ENCODE measurements at regions of chr12 and their contacts with region 1.

Region 1: DNA sequence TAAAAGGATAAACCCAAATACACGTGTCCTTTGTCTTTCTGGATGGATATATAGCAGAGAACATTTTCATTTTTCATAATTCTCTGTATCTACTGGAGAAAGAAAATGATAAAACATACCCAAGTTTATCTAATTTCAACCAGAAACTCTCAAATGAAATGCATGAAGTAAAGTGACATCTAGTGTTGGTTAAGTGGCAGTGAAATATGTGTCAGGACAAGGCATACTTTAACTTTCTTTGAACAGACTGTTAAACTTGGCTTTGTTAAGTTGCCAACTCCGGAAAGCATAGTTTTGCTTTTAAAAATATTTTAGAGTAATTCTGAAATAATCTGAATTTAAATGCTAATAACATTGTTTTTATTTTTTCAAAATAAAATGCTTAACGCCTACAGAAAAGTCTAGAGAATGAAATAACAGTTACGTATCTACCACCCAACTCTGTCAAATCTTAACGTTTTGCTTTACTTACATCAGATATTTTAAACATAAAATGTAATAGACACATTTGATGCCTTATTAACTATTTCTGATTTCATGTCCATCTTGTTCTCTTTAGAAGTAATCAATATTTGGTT is 25.2 kb upstream of the NTN4 start:
- DNase-seq: no peak
- H3K4me3 ChIP-seq: no peak overlapping the region
- H3K27ac ChIP-seq: no peak overlapping the region
- H3K27me3 ChIP-seq: no peaks in the 10 kb centered on the region
- CTCF ChIP-seq: peak; percentile 67 to 95 (median 82)

Region 2: DNA sequence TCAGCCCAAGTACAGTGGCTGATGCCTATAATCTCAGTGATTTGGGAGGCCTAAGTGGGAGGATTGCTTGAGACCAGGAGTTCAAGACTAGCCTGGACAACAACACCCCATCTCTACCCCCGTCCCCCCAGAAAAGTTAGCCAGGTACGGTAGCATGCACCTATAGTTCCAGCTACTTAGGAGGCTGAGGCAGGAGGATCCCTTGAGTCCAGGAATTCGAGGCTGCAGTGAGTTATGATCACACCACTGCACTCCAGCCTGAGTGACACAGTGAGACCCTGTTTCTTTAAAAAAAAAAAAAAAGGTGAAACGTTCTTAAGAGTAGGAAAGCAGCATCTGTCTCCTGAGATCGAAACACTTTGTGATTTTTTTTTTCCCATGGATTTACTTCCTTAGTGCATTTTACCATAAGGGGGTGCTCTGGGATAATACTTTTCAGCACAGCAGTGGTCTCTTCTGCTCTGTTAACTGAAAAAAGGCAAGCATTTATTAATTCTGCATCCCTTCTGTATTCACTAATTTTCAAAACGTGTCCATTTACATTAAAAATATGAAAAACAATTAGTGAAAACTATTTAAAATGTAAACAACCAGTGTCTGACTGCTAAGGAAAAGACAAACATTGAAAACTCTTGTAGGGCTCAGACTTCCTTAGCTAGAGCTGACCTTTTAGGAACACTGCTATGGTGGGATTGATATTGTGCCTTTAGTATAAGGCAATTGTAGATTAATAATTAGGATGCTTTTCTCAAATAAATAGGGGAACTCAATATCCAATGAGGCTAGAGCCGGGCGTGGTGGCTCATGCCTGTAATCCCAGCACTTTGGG is 233.3 kb before region 1 on chr12:
- intact Hi-C with region 1: loop called (anchors 2 kb)
- DNase-seq: no peak
- H3K4me3 ChIP-seq: no peak overlapping the region
- H3K27ac ChIP-seq: no peak overlapping the region
- H3K27me3 ChIP-seq: no peaks in the 10 kb centered on the region
- CTCF ChIP-seq: peak; percentile 11 to 82 (median 60)

Region 3: DNA sequence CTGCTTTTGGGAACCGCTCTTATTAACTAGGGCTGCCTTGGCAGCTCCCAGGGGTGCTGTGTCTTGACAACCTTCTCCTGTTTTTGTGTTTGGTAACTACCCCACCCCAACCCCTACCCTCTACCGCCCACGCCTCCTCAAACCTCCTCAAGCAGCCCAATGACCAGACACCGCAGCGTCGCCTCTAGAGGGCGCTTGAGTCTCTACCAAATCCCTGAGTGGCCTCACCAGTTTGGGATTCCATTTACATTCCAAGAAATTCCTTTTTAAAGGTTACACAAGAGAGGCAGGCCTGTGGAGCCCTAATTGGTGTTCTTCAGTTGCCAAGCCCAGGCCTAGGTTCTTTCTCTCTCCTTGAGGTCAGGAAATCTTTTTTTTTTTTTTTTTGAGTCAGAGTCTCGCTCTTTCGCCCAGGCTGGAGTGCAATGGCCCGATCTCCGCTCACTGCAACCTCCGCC is 192.1 kb before region 1 on chr12:
- intact Hi-C with region 1: loop called (anchors 2 to 10 kb)
- DNase-seq: peak in 4 of 10 donors; percentile 32 to 52 (median 40)
- H3K4me3 ChIP-seq: no peak overlapping the region
- H3K27ac ChIP-seq: no peak overlapping the region
- H3K27me3 ChIP-seq: no peaks in the 10 kb centered on the region
- CTCF ChIP-seq: peak in 54 of 56 donors; percentile 16 to 74 (median 54)

Region 4: DNA sequence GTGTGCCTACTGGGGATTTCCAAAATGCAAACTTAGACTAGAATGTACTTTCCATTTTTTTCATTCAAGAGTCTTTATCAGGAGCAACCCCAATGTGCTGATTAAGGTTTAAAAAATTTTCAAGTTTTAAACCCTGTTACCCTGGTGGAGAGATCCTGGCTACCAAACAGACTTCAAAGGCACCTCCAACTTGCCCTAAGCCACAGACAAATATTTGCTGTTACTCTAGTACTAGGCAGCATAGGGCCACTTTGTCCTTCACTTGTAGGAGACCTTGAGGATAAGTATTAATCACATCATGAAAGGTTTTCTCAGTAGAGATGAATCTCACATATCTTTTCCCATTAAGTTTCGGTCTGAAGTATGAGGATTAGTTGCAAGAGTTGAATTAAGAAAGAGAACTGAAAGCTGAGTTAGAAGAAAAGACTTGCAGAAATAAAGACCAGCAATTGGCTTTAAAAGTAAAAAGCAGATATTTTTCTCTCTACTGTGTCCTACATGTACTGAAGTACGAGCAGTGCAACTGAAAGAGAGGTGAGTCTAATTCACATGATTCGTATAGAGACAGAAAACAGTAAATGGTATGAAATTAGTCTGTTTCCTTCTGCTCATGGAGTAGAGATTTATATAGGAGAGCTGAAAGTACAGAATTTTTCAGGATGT is 53.5 kb before region 1 on chr12:
- intact Hi-C with region 1: no loop called
- DNase-seq: no peak
- H3K4me3 ChIP-seq: peak overlapping the region in 2 of 59 donors; percentile 4 to 9
- H3K27ac ChIP-seq: peak overlapping the region in 6 of 59 donors; percentile 6 to 34 (median 19)
- H3K27me3 ChIP-seq: no peaks in the 10 kb centered on the region
- CTCF ChIP-seq: no peak

Measured in dorsolateral prefrontal cortex (tissue), 120 donors.